GM13976 (cell line): ENCODE measurements at regions of chr16 and their contacts with region 1.

Region 1: DNA sequence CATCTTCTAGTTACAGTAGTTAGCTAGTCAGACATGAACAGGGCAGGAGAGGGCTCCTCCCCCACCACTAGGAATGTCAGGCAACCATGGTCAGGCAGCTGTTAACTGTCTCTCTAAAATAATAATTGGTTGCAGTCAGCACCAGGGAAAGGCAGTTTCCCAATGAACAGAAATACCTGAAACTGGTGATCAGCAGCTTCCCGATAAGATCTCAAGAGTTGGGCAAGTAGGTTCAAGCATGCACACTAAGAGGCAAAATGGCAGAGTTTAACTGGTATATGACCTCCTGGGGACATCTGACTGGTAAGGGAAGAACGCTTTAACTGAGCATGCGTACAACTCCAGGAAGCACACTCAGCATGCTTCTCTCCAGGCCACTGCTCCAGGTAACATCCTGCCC is 12.6 kb upstream of the XYLT1 start:
- DNase-seq: no peak
- CTCF ChIP-seq: no peak

Region 2: GRCh38 chr16:17397499-17397891 is 85.9 kb before region 1 on chr16:
- in situ Hi-C with region 1: no loop called
- DNase-seq: no peak
- CTCF ChIP-seq: no peak

Region 3: GRCh38 chr16:17578921-17579874 is 95.8 kb after region 1 on chr16:
- in situ Hi-C with region 1: loop called (anchors 10 kb)
- DNase-seq: peak; percentile 55
- CTCF ChIP-seq: peak; percentile 91

Region 4: DNA sequence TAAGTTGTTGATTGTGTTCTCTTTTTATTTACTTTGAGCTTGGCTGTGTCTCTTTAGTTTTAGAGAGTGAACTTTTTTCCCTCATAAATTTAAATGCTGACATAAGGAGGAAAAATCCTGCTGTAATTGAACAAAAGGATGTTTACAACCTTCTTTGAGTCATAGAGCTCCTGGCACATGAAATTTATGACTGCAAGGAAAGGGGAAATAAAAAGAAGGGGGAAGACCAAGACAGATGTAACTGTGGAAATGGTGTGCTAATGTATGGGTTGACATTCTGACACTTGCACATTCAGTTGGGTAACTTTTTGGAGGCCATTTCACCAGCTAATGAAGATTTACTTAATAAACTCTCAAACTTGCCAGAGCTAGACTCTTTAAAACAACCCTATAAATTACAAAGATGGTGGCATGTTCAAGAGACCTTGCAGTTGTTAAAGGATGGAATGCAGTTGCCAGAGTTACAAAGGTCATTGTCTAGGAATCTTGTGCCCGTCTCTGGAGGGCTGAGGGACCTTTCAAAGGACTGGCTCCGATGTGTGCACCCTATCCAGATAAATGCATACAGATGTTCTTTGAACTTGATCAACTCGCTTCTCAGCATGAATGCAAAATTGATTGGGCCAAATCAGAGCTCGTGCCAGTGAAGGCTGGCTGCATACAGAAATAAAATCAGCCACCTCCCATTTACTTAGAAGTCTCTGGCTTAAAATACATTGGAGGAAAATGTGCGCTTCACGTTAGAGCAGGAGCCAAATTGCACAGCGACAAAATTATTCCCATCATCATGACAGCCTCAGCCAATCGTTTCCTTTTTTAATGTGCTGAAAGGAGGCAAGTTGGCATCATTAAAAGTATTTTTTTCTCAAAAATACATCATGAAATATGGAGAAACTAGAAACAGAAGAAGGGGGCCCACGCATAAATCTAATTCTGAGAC is 276.4 kb after region 1 on chr16:
- in situ Hi-C with region 1: no loop called
- DNase-seq: no peak
- CTCF ChIP-seq: no peak

Region 5: DNA sequence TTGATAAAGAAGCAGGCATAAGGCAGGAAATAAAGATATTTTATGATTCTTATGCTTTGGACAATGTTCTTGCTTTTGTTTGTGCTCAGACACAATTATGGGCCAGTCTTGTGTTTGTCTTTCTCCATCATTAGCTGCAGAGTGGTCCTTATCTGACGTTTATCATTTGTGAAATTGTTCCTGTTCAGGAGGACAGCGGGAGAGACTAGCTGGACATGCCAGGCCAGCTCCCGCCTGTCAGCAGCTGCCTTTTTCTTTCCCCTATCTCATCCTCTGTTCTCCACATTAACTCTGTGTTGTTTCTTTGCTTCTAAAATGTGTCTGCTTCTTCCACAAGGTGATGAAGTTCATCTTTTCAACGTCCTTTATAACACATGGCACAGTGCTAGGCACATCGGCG is 519.7 kb after region 1 on chr16:
- in situ Hi-C with region 1: no loop called
- DNase-seq: no peak
- CTCF ChIP-seq: no peak